ENCODE measurements at regions of chr1 and their contacts with region 1.

Region 1: GRCh38 chr1:116151739-116152576 is 40.8 kb downstream of the MAB21L3 start:
- DNase-seq: peak; percentile 51
- ATAC-seq: peak; percentile 100
- H3K4me3 ChIP-seq: peak overlapping the region; percentile 44
- H3K27ac ChIP-seq: no peak overlapping the region
- H3K4me1 ChIP-seq: no peaks in the 10 kb centered on the region
- H3K27me3 ChIP-seq: peaks cover 23% of the 10 kb centered on the region
- CTCF ChIP-seq: peak; percentile 87
- POLR2A ChIP-seq: no peak
- RAD21 ChIP-seq: peak; percentile 72

Region 2: GRCh38 chr1:116115476-116116439 is 36.2 kb before region 1 on chr1:
- CTCF ChIA-PET with region 1: no interaction called
- POLR2A ChIA-PET with region 1: no interaction called
- dilution Hi-C with region 1: no loop called
- in situ Hi-C with region 1: no loop called
- intact Hi-C with region 1: no loop called
- DNase-seq: peak; percentile 75
- ATAC-seq: peak; percentile 82
- H3K4me3 ChIP-seq: no peak overlapping the region
- H3K27ac ChIP-seq: no peak overlapping the region
- H3K4me1 ChIP-seq: peaks cover 8% of the 10 kb centered on the region
- H3K27me3 ChIP-seq: no peaks in the 10 kb centered on the region
- CTCF ChIP-seq: no peak
- POLR2A ChIP-seq: no peak
- RAD21 ChIP-seq: no peak

Region 3: GRCh38 chr1:116139592-116140134 is 12.3 kb before region 1 on chr1:
- CTCF ChIA-PET with region 1: interaction called, 23 read pairs
- POLR2A ChIA-PET with region 1: no interaction called
- dilution Hi-C with region 1: no loop called
- in situ Hi-C with region 1: no loop called
- intact Hi-C with region 1: no loop called
- DNase-seq: no peak
- ATAC-seq: no peak
- H3K4me3 ChIP-seq: no peak overlapping the region
- H3K27ac ChIP-seq: no peak overlapping the region
- H3K4me1 ChIP-seq: no peaks in the 10 kb centered on the region
- H3K27me3 ChIP-seq: no peaks in the 10 kb centered on the region; the same call in 1 of the 2 replicates
- CTCF ChIP-seq: no peak
- POLR2A ChIP-seq: no peak
- RAD21 ChIP-seq: no peak

Region 4: GRCh38 chr1:116179419-116179818 is 27.5 kb after region 1 on chr1:
- CTCF ChIA-PET with region 1: no interaction called
- POLR2A ChIA-PET with region 1: no interaction called
- dilution Hi-C with region 1: no loop called
- in situ Hi-C with region 1: no loop called
- intact Hi-C with region 1: no loop called
- DNase-seq: no peak
- ATAC-seq: no peak
- H3K4me3 ChIP-seq: no peak overlapping the region
- H3K27ac ChIP-seq: no peak overlapping the region
- H3K4me1 ChIP-seq: no peaks in the 10 kb centered on the region
- H3K27me3 ChIP-seq: peaks cover 3% of the 10 kb centered on the region; the same call in 1 of the 2 replicates
- CTCF ChIP-seq: no peak
- POLR2A ChIP-seq: no peak
- RAD21 ChIP-seq: no peak

Region 5: GRCh38 chr1:116194568-116195474 is 42.9 kb after region 1 on chr1:
- CTCF ChIA-PET with region 1: no interaction called
- POLR2A ChIA-PET with region 1: no interaction called
- dilution Hi-C with region 1: no loop called
- in situ Hi-C with region 1: no loop called
- intact Hi-C with region 1: no loop called
- DNase-seq: no peak
- ATAC-seq: no peak
- H3K4me3 ChIP-seq: no peak overlapping the region
- H3K27ac ChIP-seq: no peak overlapping the region
- H3K4me1 ChIP-seq: no peaks in the 10 kb centered on the region
- H3K27me3 ChIP-seq: peaks cover 1% of the 10 kb centered on the region; the same call in 1 of the 2 replicates
- CTCF ChIP-seq: no peak
- POLR2A ChIP-seq: no peak
- RAD21 ChIP-seq: no peak

Region 6: DNA sequence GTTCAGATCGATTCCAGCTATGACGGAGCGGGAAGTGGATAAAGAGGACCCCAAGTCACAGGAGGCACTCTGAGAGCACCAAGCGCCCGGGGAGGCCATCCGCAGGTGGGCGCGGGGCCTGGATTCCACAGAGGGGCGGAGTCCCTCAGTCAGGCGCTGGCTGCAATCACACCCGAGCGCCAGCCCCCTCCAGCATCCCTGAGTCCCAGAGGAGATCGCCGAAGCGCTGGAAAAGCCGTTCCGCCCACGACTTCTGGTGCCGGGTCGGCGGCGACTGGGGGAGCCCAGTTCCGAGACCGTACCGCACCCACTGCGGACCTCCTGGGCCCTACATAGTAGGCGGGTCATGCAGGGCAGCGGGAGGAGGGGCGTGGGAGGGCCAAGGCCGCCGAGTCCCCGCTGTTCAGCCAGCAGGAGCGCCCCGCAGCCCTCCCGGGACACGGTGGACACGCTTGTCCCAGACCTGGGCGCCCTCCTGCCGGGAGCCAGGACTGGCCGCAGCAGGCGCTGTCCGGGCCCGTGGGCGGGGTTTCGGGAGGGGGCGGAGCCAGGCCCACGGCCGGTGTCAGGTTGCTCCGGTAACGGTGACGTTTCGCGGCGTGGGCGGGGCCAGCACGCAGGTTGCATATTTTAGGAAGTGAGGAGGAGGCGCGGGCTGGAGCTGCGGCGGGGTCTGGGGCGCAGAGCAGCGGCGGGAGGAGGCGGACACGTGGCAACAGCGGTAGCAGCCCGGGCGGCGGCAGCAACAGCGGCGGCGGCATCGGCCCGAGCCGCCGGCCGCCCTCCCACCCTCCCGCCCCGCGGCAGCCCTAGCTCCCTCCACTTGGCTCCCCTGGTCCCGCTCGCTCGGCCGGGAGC is 220.9 kb after region 1 on chr1 and contains the start of gene ATP1A1:
- CTCF ChIA-PET with region 1: no interaction called
- POLR2A ChIA-PET with region 1: no interaction called
- dilution Hi-C with region 1: no loop called
- in situ Hi-C with region 1: no loop called
- intact Hi-C with region 1: loop called (anchors 5 kb)
- DNase-seq: peak; percentile 83
- ATAC-seq: peak; percentile 82
- H3K4me3 ChIP-seq: peak within 1 kb of the TSS; percentile 92
- H3K27ac ChIP-seq: peak within 1 kb of the TSS; percentile 80
- H3K4me1 ChIP-seq: peaks cover 18% of the 10 kb centered on the region
- H3K27me3 ChIP-seq: peaks cover 9% of the 10 kb centered on the region
- CTCF ChIP-seq: 0 out of 2 replicates have a peak, but pooled peaks have one; percentile 8
- POLR2A ChIP-seq: peak; percentile 89
- RAD21 ChIP-seq: no peak
- total RNA-seq, gene ATP1A1: 107 and 116 TPM in 2 replicates

Measured in IMR-90 (cell line).